Heart right ventricle (tissue), 16 donors: ENCODE measurements at regions of chr19 and their contacts with region 1.

Region 1: DNA sequence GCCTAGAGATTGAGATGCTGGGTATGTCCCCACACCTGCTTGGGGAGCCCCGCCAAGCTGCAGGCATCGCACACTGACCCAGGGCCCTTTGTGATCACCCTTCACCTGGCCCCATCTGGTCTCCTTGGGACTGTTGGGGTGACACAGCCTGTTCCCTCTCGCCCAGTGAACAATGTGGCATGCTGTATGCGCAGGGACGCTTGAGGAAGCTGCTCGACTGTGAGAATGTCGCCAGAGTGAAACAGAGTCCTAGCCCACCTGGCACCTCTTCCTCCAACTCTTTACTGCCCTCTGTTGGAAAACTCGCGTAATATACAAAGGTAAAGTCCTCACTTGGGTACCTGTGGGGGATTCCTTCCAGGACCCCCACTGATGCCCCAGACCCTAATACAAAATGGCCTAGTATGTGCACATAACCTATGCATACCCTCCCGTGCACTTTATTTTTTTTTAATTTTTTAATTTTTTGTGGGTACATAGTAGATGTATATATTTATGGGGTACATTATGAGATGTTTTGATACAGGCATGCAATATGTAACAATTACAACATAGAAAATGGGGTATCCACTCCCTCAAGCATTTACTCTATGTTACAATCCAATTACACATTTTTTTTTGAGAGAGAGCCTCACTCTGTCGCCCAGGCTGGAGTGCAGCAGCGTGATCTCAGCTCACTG is 9.0 kb downstream of the BLOC1S3 start:
- DNase-seq: no peak
- ATAC-seq: peak in 5 of 8 donors; percentile 23 to 56 (median 32)
- H3K4me3 ChIP-seq: no peak overlapping the region
- H3K27ac ChIP-seq: no peak overlapping the region
- H3K4me1 ChIP-seq: peaks cover 0 to 12% (median 0%) of the 10 kb centered on the region in 9 donors
- H3K27me3 ChIP-seq: no peaks in the 10 kb centered on the region
- CTCF ChIP-seq: peak in 8 of 9 donors; percentile 41 to 67 (median 58)

Region 2: GRCh38 chr19:44770550-44771257 is 416.9 kb before region 1 on chr19:
- intact Hi-C with region 1: no loop called
- DNase-seq: peak; percentile 88 to 91
- ATAC-seq: peak; percentile 94 to 99 (median 97)
- H3K4me3 ChIP-seq: peak overlapping the region in 1 of 10 donors; percentile 10
- H3K27ac ChIP-seq: peak overlapping the region in 1 of 10 donors; percentile 72
- H3K4me1 ChIP-seq: peaks cover 0 to 41% (median 0%) of the 10 kb centered on the region in 9 donors
- H3K27me3 ChIP-seq: peaks cover 0 to 7% (median 0%) of the 10 kb centered on the region in 7 donors
- CTCF ChIP-seq: peak; percentile 82 to 95 (median 88)

Region 3: GRCh38 chr19:45016388-45017319 is 170.9 kb before region 1 on chr19:
- intact Hi-C with region 1: loop called in 1 of 10 experiments (anchors 5 kb)
- DNase-seq: peak; percentile 46 to 53
- ATAC-seq: peak; percentile 49 to 91 (median 75)
- H3K4me3 ChIP-seq: no peak overlapping the region
- H3K27ac ChIP-seq: peak overlapping the region in 1 of 10 donors; percentile 34
- H3K4me1 ChIP-seq: peaks cover 0 to 6% (median 3%) of the 10 kb centered on the region in 9 donors
- H3K27me3 ChIP-seq: no peaks in the 10 kb centered on the region
- CTCF ChIP-seq: peak; percentile 15 to 73 (median 65)

Region 4: DNA sequence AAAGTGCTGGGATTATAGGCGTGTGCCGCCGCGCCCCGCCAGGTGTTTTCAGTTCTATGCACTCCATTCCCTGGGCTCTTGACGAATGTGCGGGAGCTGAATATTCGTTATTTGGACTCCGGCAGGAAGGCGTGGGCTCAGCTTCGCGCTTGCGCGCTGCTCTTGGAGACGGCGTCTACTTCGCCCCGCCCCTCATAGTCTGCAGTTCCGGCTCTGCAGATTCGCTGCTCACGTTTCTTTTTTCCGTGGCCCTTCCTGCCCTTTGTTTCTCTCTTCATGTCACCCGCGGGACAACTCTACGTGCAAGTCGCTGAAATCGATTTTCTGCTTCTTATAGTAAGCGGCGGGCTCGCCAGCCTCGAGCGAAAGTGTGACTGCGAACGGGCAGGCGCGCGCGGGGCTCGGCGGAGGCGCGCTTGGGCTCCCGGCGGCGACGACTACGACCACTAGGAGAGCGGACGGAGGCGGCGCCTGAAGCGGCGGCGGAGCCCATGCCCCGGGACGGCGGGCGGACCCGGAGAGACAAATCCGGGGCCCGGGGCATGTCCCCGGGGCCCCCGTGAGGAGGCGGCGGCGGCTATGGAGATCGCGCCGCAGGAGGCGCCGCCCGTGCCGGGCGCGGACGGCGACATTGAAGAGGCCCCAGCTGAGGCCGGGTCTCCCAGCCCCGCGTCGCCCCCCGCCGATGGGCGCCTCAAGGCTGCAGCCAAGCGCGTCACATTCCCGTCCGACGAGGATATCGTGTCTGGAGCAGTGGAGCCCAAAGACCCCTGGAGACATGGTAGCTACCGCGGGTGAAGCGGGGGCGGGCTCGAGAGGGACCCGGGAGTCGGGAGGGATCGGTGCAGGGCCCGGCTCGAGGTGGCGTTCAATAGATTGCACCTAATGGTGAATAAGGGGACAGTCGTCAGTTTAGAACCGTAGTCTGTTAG is 94.5 kb before region 1 on chr19 and contains the start of gene PPP1R37:
- intact Hi-C with region 1: loop called in 1 of 10 experiments (anchors 10 kb)
- DNase-seq: peak; percentile 93 to 95
- ATAC-seq: peak; percentile 89 to 96 (median 92)
- H3K4me3 ChIP-seq: peak within 1 kb of the TSS; percentile 77 to 99 (median 92)
- H3K27ac ChIP-seq: peak within 1 kb of the TSS; percentile 23 to 97 (median 88)
- H3K4me1 ChIP-seq: peaks cover 14 to 66% (median 52%) of the 10 kb centered on the region in 9 donors
- H3K27me3 ChIP-seq: no peaks in the 10 kb centered on the region
- CTCF ChIP-seq: peak in 8 of 9 donors; percentile 15 to 57 (median 40)
- total RNA-seq, gene PPP1R37: 12.5 to 19.2 (median 15.8) TPM